Heart left ventricle (tissue), 16 donors: ENCODE measurements at regions of chr2 and their contacts with region 1.

Region 1: GRCh38 chr2:158456309-158457066 is at the starts of genes CCDC148 and PKP4:
- DNase-seq: peak; percentile 91 to 94 (median 93)
- ATAC-seq: peak; percentile 97 to 98 (median 98)
- H3K4me3 ChIP-seq: peak within 1 kb of the TSS; percentile 66 to 98 (median 87)
- H3K27ac ChIP-seq: peak within 1 kb of the TSS; percentile 89 to 98 (median 96)
- H3K4me1 ChIP-seq: peaks cover 0 to 37% (median 21%) of the 10 kb centered on the region in 12 donors
- H3K27me3 ChIP-seq: no peaks in the 10 kb centered on the region
- CTCF ChIP-seq: peak in 7 of 12 donors; percentile 16 to 47 (median 30)
- POLR2A ChIP-seq: peak in 1 of 2 donors; percentile 59
- total RNA-seq, gene CCDC148: 0.31 to 1.2 (median 0.93) TPM in 8 of 9 donors, not detected in the other
- total RNA-seq, gene PKP4: 34.1 to 66.7 (median 49.4) TPM

Region 2: DNA sequence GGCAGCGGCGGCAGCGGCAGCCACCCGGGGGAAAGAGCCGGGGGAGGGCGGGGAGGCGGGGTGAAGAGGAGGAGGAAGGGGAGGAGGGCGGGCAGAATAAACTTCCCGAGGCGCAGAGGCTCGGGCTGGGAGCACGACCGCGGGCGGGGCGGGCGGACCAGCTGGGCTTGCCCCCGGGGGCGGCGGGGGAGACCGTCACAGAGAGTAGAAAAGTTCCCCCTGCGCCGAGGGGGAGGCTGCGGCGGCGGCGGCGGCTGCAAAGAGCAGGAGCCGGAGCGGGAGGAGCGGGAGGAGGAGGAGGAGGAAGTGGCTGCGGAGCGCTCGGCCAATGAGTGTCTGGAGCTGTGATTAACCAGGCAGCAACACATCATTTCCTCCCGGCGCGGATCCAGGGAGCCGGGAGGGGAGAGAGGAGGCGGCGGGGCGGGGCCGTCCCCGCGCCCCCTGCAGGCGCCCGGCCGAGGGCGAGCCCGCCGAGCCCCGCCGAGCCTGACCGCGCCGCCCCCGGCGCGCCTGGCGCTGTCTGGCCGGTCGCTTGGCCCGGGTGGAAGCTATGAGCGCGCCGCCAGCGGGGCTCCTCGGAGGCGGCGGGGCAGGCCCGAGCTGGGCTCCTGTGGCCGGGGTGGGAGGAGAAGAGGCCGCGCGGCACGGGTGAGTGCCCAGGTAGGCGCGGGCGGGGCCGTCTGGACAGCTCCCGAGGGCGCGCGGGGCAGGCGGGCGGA is 580.3 kb before region 1 on chr2 and contains the start of gene ACVR1:
- intact Hi-C with region 1: loop called in 1 of 10 experiments (anchors 10 kb)
- DNase-seq: peak; percentile 96 to 97 (median 97)
- ATAC-seq: peak; percentile 95 to 98 (median 96)
- H3K4me3 ChIP-seq: peak within 1 kb of the TSS; percentile 46 to 97 (median 86)
- H3K27ac ChIP-seq: peak within 1 kb of the TSS; percentile 92 to 100 (median 96)
- H3K4me1 ChIP-seq: peaks cover 0 to 44% (median 25%) of the 10 kb centered on the region in 12 donors
- H3K27me3 ChIP-seq: no peaks in the 10 kb centered on the region
- CTCF ChIP-seq: peak in 11 of 12 donors; percentile 22 to 66 (median 36)
- POLR2A ChIP-seq: peak in 1 of 2 donors; percentile 67
- total RNA-seq, gene ACVR1: 15.3 to 37.6 (median 23.9) TPM

Region 3: DNA sequence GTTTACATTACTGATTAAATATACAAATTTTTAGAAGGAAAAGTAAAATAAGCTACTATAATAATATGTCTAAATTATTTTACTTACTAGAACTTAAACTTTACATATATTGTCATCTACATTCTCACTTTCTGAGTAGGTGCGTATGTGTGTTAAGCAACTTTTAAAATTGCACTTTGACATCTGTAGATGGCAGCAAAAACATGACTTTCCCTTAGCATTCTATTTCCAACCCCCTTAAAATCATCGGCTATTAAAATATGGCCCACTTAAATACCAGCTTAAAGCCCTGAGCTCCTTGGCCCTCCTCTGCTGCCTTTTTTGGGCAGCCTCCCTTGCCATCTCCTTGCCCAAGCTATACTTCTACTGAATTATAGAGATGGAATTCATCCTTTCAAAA is 276.8 kb before region 1 on chr2:
- intact Hi-C with region 1: loop called in 6 of 10 experiments (anchors 5 to 10 kb)
- DNase-seq: no peak
- ATAC-seq: peak in 2 of 4 donors; percentile 27 to 60
- H3K4me3 ChIP-seq: no peak overlapping the region
- H3K27ac ChIP-seq: no peak overlapping the region
- H3K4me1 ChIP-seq: peaks cover 0 to 7% (median 0%) of the 10 kb centered on the region in 12 donors
- H3K27me3 ChIP-seq: no peaks in the 10 kb centered on the region
- CTCF ChIP-seq: peak in 11 of 12 donors; percentile 21 to 67 (median 44)
- POLR2A ChIP-seq: no peak

Region 4: GRCh38 chr2:158507166-158507565 is 50.7 kb after region 1 on chr2:
- intact Hi-C with region 1: no loop called
- DNase-seq: no peak
- ATAC-seq: no peak
- H3K4me3 ChIP-seq: no peak overlapping the region
- H3K27ac ChIP-seq: no peak overlapping the region
- H3K4me1 ChIP-seq: peaks cover 0 to 44% (median 15%) of the 10 kb centered on the region in 12 donors
- H3K27me3 ChIP-seq: no peaks in the 10 kb centered on the region
- CTCF ChIP-seq: no peak
- POLR2A ChIP-seq: no peak

Region 5: GRCh38 chr2:158600155-158600802 is 143.8 kb after region 1 on chr2:
- intact Hi-C with region 1: loop called in 2 of 10 experiments (anchors 5 to 10 kb)
- DNase-seq: peak in 4 of 5 donors; percentile 62 to 66 (median 62)
- ATAC-seq: peak; percentile 21 to 95 (median 84)
- H3K4me3 ChIP-seq: no peak overlapping the region
- H3K27ac ChIP-seq: peak overlapping the region in 4 of 12 donors; percentile 0 to 53 (median 6)
- H3K4me1 ChIP-seq: peaks cover 0 to 28% (median 15%) of the 10 kb centered on the region in 12 donors
- H3K27me3 ChIP-seq: no peaks in the 10 kb centered on the region
- CTCF ChIP-seq: no peak
- POLR2A ChIP-seq: no peak

Region 6: DNA sequence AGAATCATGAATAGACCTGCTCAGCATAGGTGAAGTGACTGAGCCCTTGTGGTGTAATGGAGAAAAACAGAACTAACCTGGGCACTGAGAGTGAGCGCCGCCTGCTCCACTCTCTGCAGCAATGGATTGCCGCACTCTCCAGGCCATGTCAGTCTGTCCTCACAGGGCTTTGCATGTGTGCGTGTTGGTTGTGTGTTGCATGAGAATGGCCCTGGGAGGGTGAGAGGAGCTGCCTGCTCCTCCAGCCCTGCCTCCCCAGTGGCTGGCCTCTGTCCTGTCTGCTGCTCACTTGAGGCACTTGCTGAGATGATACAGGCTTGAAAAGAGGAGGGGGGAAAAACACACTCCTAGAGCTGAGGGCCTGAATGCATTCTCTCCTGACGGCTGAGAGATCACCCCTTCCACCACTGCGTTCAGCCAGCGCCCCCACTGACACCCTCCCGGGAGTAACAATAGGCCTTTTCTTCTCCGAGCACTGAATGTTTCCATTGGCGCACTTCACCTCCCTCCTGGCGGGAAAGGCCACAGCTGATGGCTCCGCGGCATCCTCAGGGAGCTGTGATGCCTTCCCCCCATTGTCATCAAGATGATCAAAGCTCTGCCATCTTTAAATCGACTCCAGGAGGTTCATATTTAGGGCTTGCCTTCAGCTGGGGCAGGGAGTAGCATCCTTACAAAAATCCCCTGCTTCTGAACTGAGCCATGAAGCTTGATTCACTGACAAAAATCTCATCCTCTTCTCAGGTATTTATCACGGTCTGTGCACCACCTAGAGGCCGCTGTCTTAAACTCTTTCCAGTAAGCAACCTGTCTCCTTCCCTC is 288.8 kb after region 1 on chr2:
- intact Hi-C with region 1: loop called (anchors 2 to 5 kb)
- DNase-seq: peak in 4 of 5 donors; percentile 39 to 56 (median 44)
- ATAC-seq: peak; percentile 44 to 67 (median 60)
- H3K4me3 ChIP-seq: no peak overlapping the region
- H3K27ac ChIP-seq: peak overlapping the region in 3 of 12 donors; percentile 1 to 61 (median 20)
- H3K4me1 ChIP-seq: peaks cover 3 to 69% (median 32%) of the 10 kb centered on the region in 12 donors
- H3K27me3 ChIP-seq: no peaks in the 10 kb centered on the region
- CTCF ChIP-seq: peak; percentile 28 to 66 (median 54)
- POLR2A ChIP-seq: no peak